ENCODE measurements at regions of chr11 and their contacts with region 1.

Region 1: GRCh38 chr11:15074206-15075161 is 1.1 kb downstream of the CALCB start:
- DNase-seq: peak; percentile 64
- ATAC-seq: peak; percentile 81
- H3K4me3 ChIP-seq: no peak overlapping the region
- H3K27ac ChIP-seq: no peak overlapping the region
- H3K4me1 ChIP-seq: no peaks in the 10 kb centered on the region
- H3K27me3 ChIP-seq: peaks cover 14% of the 10 kb centered on the region
- CTCF ChIP-seq: peak; percentile 62

Region 2: GRCh38 chr11:14308114-14308896 is 766.2 kb before region 1 on chr11:
- CTCF ChIA-PET with region 1: no interaction called
- POLR2A ChIA-PET with region 1: no interaction called
- intact Hi-C with region 1: no loop called
- DNase-seq: peak; percentile 62
- ATAC-seq: peak; percentile 49
- H3K4me3 ChIP-seq: peak overlapping the region; percentile 22; the same call in 1 of the 2 replicates
- H3K27ac ChIP-seq: peak overlapping the region; percentile 14
- H3K4me1 ChIP-seq: peaks cover 36% of the 10 kb centered on the region
- H3K27me3 ChIP-seq: no peaks in the 10 kb centered on the region
- CTCF ChIP-seq: peak; percentile 69

Region 3: DNA sequence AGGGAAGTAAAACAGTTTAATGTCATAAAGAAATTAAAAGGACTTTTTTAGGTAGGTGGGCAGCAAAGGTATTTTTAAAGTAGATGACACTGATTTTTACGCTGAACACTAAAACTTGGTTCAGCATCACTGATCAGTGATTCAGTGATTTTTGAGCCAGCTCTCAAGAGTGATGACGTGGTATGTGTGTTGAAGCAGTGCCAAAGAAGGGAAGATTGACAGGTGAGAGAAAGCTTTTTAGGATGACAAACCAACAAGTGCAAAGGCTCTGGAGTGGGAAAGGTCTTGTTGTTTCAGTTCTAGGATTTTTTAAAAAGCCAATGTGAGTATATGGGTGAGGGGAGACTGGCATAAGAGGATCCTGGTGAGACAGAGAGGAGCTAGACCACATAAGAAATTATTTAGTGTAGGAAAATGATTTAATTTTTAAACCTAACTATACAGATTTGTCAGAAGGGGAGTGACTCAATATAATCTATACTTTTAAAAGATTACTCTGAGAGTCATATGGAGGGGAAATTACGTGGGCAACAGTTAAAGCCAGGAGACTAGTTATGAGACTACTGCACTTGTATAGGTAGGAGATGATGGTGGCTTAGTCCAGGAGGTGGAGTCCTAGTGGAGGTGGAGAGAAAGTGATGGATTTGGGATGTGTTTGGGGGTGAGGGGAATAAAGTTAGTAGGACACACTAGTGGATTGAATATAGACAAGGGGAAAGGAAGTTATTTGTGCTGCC is 18.7 kb before region 1 on chr11:
- CTCF ChIA-PET with region 1: no interaction called
- POLR2A ChIA-PET with region 1: no interaction called
- intact Hi-C with region 1: no loop called
- DNase-seq: no peak
- ATAC-seq: no peak
- H3K4me3 ChIP-seq: no peak overlapping the region
- H3K27ac ChIP-seq: no peak overlapping the region
- H3K4me1 ChIP-seq: no peaks in the 10 kb centered on the region
- H3K27me3 ChIP-seq: no peaks in the 10 kb centered on the region
- CTCF ChIP-seq: no peak

Region 4: DNA sequence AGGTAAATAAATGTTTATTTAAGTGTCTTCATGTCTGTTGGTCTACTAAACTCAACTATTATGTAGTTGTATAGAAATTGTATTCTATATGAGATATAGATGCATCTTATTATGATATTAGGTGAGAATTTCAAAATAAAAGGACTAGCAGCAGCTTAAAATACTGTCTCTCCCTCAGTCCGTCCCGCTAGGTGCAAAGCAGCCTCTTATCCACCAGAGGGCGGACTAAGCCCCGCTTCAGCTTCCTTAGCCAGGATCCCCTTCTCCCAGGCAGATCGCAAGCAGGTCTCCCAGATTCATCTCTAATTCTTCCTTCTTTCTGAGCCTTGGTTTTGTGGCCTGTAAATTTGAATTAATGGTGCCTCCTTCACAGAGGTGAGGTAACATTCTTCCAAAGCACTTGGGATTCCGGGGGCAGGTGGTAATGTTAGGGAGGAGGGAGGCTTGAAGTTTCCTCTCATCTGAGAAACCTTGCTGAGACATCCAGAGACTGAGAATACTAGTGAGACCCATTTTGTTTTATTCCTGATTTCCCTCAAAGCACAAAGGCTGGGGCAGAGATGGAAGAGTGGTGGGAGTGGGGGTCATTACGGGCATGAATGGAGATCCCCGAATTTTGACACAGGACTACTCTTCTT is 26.7 kb after region 1 on chr11:
- CTCF ChIA-PET with region 1: no interaction called
- POLR2A ChIA-PET with region 1: no interaction called
- intact Hi-C with region 1: loop called (anchors 1 kb)
- DNase-seq: peak; percentile 66
- ATAC-seq: peak; percentile 61
- H3K4me3 ChIP-seq: no peak overlapping the region
- H3K27ac ChIP-seq: no peak overlapping the region
- H3K4me1 ChIP-seq: peaks cover 7% of the 10 kb centered on the region
- H3K27me3 ChIP-seq: no peaks in the 10 kb centered on the region
- CTCF ChIP-seq: peak; percentile 85